ENCODE measurements at regions of chr2 and their contacts with region 1.

Region 1: GRCh38 chr2:183124222-183124956 is at the start of gene NUP35:
- DNase-seq: peak; percentile 66 to 76
- ATAC-seq: peak; percentile 99
- H3K4me3 ChIP-seq: peak within 1 kb of the TSS; percentile 78 to 99 (median 82)
- H3K27ac ChIP-seq: peak within 1 kb of the TSS; percentile 85 to 90 (median 88)
- H3K4me1 ChIP-seq: peaks cover 12 to 16% of the 10 kb centered on the region in 2 donors
- H3K27me3 ChIP-seq: no peaks in the 10 kb centered on the region
- CTCF ChIP-seq: no peak
- POLR2A ChIP-seq: no peak
- total RNA-seq, gene NUP35: 3.6 to 9.7 (median 5.6) TPM

Region 2: GRCh38 chr2:182968493-182968892 is 155.9 kb before region 1 on chr2:
- in situ Hi-C with region 1: no loop called
- intact Hi-C with region 1: no loop called
- DNase-seq: no peak
- ATAC-seq: no peak
- H3K4me3 ChIP-seq: no peak overlapping the region
- H3K27ac ChIP-seq: no peak overlapping the region
- H3K4me1 ChIP-seq: peaks cover 6 to 9% of the 10 kb centered on the region in 2 donors
- H3K27me3 ChIP-seq: no peaks in the 10 kb centered on the region
- CTCF ChIP-seq: no peak
- POLR2A ChIP-seq: no peak

Region 3: GRCh38 chr2:183078465-183079138 is 45.8 kb before region 1 on chr2 and contains the start of gene DUSP19:
- in situ Hi-C with region 1: loop called in 1 of 4 experiments (anchors 10 kb)
- intact Hi-C with region 1: loop called (anchors 1 kb)
- DNase-seq: peak; percentile 74 to 92
- ATAC-seq: peak; percentile 99
- H3K4me3 ChIP-seq: peak within 1 kb of the TSS; percentile 77 to 92 (median 88)
- H3K27ac ChIP-seq: peak within 1 kb of the TSS; percentile 78 to 84 (median 80)
- H3K4me1 ChIP-seq: peaks cover 0 to 9% of the 10 kb centered on the region in 2 donors
- H3K27me3 ChIP-seq: no peaks in the 10 kb centered on the region
- CTCF ChIP-seq: no peak
- POLR2A ChIP-seq: peak; percentile 44 to 66
- total RNA-seq, gene DUSP19: 0.47 to 5.9 (median 2.1) TPM

Region 4: DNA sequence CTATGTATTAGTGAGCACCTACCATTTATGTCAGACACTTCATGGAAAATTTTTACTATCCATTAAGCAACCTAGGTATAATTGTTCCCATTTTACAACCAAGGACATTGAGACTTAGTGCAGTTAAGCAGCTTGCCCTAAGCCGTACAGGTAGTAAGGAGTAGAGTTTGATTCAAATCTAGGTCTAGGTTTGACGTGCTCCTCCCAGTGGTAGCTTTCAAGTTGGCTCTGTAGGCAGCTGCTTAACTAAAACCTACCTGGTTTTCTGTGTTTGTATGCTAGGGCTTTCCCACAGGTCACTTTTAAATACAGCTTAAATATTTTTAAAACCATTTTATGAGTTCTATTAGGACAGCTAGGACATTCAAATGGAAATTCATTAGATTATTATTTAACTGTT is 69.5 kb after region 1 on chr2:
- in situ Hi-C with region 1: no loop called
- intact Hi-C with region 1: no loop called
- DNase-seq: no peak
- ATAC-seq: no peak
- H3K4me3 ChIP-seq: no peak overlapping the region
- H3K27ac ChIP-seq: no peak overlapping the region
- H3K4me1 ChIP-seq: no peaks in the 10 kb centered on the region
- H3K27me3 ChIP-seq: no peaks in the 10 kb centered on the region
- CTCF ChIP-seq: no peak
- POLR2A ChIP-seq: no peak

Region 5: DNA sequence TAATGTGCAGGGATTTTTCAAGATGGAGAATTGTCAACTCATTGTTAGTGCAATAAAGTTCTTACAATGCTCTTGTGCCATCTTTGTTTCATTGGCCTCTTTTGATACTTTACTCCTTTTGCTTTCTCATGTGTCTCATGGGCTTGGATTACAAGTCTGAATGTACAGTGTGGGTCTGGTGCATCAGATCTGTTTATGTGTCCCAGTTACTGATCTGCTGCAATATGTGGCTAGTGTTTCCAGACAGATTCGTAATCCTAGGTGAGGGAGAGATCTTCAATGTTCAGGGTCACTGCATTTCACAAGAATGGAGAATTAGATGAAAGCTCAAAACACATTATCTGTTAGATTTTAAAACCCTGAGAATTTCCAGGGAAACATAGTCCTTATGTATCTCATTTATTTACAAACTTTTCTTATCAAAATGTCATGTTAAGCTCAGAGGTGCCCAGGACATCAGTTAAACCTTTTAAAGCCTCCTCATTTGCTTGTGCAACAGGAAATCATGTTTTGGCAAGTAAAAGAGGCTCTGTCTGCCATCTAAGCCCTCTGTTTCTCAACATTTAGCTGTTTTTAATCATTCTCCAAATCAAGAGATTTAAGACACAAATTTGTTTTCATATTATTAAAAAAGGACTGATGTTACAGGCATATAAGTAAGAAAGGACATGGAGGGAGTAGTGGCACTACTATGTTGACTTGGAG is 107.9 kb after region 1 on chr2:
- in situ Hi-C with region 1: no loop called
- intact Hi-C with region 1: no loop called
- DNase-seq: no peak
- ATAC-seq: peak in 1 of 2 donors; percentile 65
- H3K4me3 ChIP-seq: no peak overlapping the region
- H3K27ac ChIP-seq: no peak overlapping the region
- H3K4me1 ChIP-seq: peaks cover 3 to 8% of the 10 kb centered on the region in 2 donors
- H3K27me3 ChIP-seq: no peaks in the 10 kb centered on the region
- CTCF ChIP-seq: no peak
- POLR2A ChIP-seq: no peak

Measured in gastrocnemius medialis (tissue), 4 donors.